ENCODE measurements at regions of chr10 and their contacts with region 1.

Region 1: DNA sequence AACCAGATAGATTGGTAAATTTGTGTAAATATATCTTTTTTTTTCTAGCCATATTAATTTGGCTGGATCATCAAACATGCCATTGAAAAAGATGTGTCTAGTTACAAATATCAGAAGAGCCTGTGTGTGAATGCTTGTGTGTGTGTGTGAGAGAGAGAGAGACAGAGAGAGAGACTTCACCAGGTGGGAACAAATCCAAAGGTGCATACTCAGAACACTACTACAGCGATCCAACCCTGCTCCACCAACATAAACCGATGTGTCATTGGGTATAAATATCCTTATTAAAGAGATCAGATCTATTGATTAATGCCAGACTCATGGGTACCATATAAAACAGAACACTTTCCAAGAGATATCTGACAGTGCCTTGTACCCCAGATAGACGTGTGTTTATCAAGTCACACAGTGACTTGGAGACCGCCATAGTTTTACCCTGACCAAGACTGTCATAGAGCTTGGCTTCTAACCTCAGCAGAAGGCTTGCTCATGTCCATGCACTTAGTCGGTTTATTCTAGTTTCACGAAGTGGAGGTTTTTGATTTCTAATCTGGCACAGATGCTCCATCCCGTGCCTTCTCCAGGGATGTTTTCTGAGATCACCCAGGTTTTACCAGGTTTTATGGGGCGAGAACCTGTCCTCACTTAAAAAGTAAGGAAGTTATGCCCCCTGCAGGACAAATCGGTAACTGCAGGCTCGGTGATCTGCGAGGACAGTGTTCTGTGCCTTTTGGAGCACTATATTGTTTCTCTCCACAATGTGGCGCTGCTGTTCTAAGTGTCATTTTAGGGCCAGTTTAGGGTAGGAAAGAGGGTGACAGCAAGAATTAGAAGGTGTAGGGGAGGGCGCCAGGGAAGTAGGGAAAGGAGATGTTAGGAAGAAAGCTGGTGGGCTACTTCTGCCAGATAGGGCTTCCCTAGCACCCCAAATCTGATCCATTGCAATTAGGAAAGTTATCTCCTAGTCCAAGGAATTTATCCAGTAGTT is 29.3 kb upstream of the WNT8B start:
- DNase-seq: peak; percentile 98
- H3K4me3 Mint-ChIP-seq: no peak overlapping the region
- H3K27ac Mint-ChIP-seq: peak overlapping the region; percentile 9
- H3K4me1 Mint-ChIP-seq: peaks cover 14% of the 10 kb centered on the region
- H3K27me3 Mint-ChIP-seq: no peaks in the 10 kb centered on the region

Region 2: DNA sequence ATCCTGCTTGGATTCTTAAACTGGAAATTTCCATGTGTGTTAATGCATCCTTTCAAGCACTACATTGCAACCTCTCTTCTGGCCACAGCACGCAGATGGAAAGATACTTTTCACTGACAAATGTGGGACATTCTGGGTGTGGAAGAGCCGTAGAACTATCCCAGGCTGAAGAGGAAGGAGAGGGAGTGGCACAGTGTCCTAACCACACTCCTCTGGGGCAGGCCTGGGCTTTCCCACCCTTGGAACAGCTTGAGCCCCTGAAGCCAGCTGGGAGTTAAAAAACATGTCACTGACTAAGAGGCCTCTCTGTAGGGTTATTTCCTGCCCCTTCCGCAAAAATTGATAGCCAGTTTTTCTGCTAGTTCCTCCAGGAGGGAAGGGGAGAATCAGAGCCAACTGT is 389.7 kb before region 1 on chr10:
- CTCF ChIA-PET with region 1: no interaction called
- POLR2A ChIA-PET with region 1: no interaction called
- DNase-seq: no peak
- H3K4me3 Mint-ChIP-seq: no peak overlapping the region
- H3K27ac Mint-ChIP-seq: no peak overlapping the region
- H3K4me1 Mint-ChIP-seq: no peaks in the 10 kb centered on the region
- H3K27me3 Mint-ChIP-seq: peaks cover 5% of the 10 kb centered on the region

Region 3: DNA sequence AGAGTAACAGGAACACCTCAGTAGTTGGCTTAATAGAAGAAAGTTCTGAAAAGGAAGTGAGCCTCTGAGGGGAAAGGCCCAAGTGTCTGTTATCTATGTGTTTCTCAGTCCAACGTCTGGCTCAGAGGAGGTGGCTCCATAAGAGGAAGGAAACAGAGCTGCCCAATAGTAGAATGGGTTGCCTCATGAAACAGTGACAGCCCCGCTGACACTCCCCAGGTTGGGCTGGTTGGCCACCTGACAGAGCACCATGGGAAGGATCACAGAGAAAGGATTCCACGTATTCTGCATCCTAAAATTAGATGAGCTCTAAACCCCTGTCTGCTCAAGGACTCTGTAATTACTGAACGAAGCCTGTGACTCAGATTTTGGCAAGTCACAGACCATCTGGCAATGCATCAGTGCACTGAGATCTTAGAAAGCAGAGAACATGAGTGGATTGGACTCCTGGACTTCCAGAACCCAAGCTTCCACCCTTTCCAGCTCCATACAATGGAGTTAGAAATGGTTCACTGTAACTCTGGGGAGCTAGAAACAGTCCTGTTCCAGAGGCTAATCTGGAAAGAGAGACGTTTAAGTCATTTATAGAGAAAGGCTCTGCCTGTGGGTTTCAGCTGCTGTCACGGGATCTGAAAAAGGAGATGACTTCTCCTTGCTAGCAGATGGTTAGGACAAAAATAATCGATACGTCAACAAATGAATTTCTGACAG is 106.4 kb before region 1 on chr10:
- CTCF ChIA-PET with region 1: interaction called, 11 read pairs
- POLR2A ChIA-PET with region 1: no interaction called
- DNase-seq: peak; percentile 42
- H3K4me3 Mint-ChIP-seq: no peak overlapping the region
- H3K27ac Mint-ChIP-seq: no peak overlapping the region
- H3K4me1 Mint-ChIP-seq: peaks cover 16% of the 10 kb centered on the region
- H3K27me3 Mint-ChIP-seq: peaks cover 14% of the 10 kb centered on the region

Region 4: DNA sequence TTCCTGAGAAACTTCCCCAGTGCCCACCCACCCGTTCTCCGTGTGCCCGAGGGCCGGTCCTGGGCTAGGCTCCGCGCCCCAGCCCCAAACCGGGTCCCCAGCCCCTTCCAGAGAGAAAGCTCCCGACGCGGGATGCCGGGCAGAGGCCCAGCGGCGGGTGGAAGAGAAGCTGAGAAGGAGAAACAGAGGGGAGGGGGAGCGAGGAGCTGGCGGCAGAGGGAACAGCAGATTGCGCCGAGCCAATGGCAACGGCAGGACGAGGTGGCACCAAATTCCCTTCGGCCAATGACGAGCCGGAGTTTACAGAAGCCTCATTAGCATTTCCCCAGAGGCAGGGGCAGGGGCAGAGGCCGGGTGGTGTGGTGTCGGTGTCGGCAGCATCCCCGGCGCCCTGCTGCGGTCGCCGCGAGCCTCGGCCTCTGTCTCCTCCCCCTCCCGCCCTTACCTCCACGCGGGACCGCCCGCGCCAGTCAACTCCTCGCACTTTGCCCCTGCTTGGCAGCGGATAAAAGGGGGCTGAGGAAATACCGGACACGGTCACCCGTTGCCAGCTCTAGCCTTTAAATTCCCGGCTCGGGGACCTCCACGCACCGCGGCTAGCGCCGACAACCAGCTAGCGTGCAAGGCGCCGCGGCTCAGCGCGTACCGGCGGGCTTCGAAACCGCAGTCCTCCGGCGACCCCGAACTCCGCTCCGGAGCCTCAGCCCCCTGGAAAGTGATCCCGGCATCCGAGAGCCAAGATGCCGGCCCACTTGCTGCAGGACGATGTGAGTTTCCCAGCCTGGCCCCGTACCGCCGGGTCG is 86.6 kb before region 1 on chr10 and contains the start of gene SCD:
- CTCF ChIA-PET with region 1: interaction called, 16 read pairs
- POLR2A ChIA-PET with region 1: no interaction called
- DNase-seq: peak; percentile 93
- H3K4me3 Mint-ChIP-seq: peak within 1 kb of the TSS; percentile 97
- H3K27ac Mint-ChIP-seq: peak within 1 kb of the TSS; percentile 83
- H3K4me1 Mint-ChIP-seq: peaks cover 71% of the 10 kb centered on the region
- H3K27me3 Mint-ChIP-seq: no peaks in the 10 kb centered on the region
- total RNA-seq, gene SCD: 117 to 129 TPM

Measured in activated CD4-positive, alpha-beta T cell treated with anti-CD3 and anti-CD28 coated beads, Interleukin-2, amount 10 ng/mL, durations not matched to agents 7 days and 5 days (primary cell).